ENCODE measurements at regions of chr19 and their contacts with region 1.

Region 1: DNA sequence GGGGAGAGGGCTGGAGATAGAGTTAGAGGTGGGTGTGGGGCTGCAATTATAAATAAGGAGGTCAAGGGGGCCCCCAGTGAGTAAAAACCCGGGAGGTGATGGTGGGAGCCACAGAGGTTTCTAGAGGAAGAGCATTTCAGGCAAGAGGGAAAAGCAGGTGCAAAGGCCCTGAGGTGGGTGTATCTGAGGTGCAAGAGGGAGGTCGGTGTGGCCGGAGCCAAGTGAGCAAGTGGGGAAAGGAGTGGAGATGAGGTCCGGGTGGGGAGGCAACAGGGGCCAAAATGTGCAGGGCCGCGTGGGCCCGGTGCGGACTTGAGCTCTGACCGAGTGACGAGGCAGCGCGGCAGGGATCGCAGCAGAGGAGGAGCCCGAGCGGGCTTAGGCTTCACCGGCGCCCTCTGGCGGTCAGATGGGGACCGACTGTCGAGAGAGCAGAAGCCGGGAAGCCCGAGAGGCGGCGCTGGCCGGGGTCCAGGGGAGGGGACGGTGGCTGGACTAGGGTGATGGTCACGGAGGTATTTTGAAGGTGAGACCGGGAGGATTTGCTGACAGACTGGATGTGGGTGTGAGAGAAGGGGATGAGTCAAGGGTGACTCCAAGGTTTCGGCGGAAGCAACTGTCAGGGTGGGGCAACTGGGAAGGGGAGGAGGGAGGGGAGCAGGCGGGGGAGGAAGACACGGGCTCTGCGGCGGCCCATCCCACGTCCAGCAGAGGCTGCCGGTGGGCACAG is 17.7 kb upstream of the SPACA4 start:
- DNase-seq: peak; percentile 47
- ATAC-seq: peak; percentile 93
- H3K4me3 ChIP-seq: peak overlapping the region; percentile 39 to 60
- H3K27ac ChIP-seq: no peak overlapping the region
- H3K4me1 ChIP-seq: 0 out of 2 replicates have a peak, but pooled peaks cover 4% of the 10 kb centered on the region
- H3K27me3 ChIP-seq: no peaks in the 10 kb centered on the region
- CTCF ChIP-seq: peak; percentile 94

Region 2: DNA sequence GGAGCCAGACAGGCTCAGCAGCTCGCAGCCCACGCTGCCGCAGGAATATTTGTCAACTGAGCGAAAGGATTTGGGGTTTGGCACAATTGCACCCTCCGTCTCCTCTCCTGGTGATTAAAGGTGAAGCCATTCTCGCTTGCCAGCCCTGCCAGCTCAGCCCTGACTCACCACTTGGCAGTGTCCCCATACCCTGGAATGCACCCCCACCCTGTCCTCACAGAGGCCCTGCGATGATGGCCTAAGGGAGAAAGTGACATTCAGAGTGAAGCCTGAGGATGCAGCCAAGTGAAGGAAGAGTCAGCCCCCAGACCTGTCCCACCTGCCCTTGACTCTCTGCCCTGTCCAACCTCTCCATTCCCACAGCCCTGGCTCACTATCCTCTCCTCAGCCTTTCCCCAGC is 100.8 kb before region 1 on chr19:
- CTCF ChIA-PET with region 1: interaction called, 11 read pairs
- POLR2A ChIA-PET with region 1: no interaction called
- in situ Hi-C with region 1: no loop called
- intact Hi-C with region 1: no loop called
- DNase-seq: peak; percentile 81
- ATAC-seq: peak; percentile 76
- H3K4me3 ChIP-seq: peak overlapping the region in 1 of 2 experiments; percentile 19; a peak in 1 of 4 replicates
- H3K27ac ChIP-seq: peak overlapping the region; percentile 82
- H3K4me1 ChIP-seq: peaks cover 28% of the 10 kb centered on the region
- H3K27me3 ChIP-seq: no peaks in the 10 kb centered on the region
- CTCF ChIP-seq: no peak

Region 3: DNA sequence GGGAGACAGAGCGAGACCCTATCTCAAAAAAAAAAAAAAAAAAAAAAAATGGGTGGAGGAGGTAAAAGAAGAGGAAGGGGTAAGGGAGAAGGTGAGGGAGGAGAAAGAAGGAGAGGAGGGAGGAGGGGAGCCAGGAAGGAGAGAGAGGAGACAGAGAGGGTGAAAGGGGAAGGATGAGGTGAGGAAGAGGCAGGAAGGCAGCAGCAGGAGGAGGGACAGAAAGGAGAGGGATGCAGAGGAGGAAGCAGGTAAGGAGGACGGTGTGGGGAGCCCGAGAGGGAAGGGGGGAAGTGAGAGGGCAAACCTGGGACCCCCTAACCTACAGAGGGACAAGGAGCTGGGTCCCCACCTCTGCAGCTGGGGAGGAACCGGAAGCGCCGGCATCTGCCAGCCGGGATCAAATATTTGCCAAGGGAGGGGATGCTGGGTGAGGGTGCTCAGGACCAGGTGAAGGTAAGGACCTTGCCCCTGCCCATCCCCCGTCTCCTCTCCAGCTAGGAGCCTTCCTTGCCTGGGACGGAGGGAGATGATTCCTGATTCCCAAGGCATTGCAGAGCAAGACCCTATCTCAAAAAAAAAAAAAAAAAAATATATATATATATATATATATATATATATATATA is 13.4 kb after region 1 on chr19:
- CTCF ChIA-PET with region 1: no interaction called
- POLR2A ChIA-PET with region 1: no interaction called
- in situ Hi-C with region 1: no loop called
- intact Hi-C with region 1: no loop called
- DNase-seq: no peak
- ATAC-seq: no peak
- H3K4me3 ChIP-seq: no peak overlapping the region
- H3K27ac ChIP-seq: no peak overlapping the region
- H3K4me1 ChIP-seq: no peaks in the 10 kb centered on the region
- H3K27me3 ChIP-seq: no peaks in the 10 kb centered on the region
- CTCF ChIP-seq: no peak

Region 4: DNA sequence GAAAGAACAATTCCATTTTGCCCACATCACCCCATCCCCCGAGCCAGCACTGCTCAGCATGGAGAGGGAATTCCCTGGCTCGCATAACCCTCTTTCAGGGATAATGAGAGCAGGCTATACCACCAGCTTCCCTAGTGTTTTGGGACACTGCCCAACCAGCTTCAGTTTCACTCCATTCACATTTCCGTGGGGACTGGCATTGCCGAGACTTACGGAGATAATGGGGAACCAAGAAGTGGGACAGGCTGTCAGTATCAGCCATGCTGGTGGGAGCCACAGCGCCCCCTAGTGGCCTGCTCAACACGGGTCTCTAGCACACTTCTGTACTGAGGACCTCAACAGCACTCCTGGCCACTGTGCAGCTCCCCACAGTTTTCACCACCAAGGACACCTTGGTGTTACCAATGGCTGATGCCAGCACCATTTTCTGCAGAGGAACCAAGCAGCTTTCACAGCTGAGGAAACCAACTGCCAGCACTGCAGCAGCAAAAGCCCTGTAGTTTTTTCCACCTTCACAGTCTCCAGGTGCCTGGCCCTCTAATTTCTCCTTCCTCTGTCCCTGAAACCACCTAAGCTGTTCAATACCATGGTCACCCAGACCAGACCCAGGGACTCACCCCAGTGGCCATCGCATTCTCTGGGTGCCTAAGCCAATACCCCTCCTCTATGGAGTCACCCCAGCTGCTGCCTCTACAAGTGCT is 712.5 kb after region 1 on chr19:
- CTCF ChIA-PET with region 1: no interaction called
- POLR2A ChIA-PET with region 1: no interaction called
- in situ Hi-C with region 1: no loop called
- intact Hi-C with region 1: no loop called
- DNase-seq: peak; percentile 38
- ATAC-seq: peak; percentile 96
- H3K4me3 ChIP-seq: no peak overlapping the region
- H3K27ac ChIP-seq: no peak overlapping the region
- H3K4me1 ChIP-seq: no peaks in the 10 kb centered on the region; the same call in 1 of the 2 replicates
- H3K27me3 ChIP-seq: no peaks in the 10 kb centered on the region
- CTCF ChIP-seq: peak; percentile 90

Region 5: GRCh38 chr19:49528211-49528771 is 939.5 kb after region 1 on chr19:
- CTCF ChIA-PET with region 1: no interaction called
- POLR2A ChIA-PET with region 1: no interaction called
- in situ Hi-C with region 1: no loop called
- intact Hi-C with region 1: no loop called
- DNase-seq: no peak
- ATAC-seq: no peak
- H3K4me3 ChIP-seq: peak overlapping the region; percentile 46 to 58
- H3K27ac ChIP-seq: no peak overlapping the region
- H3K4me1 ChIP-seq: no peaks in the 10 kb centered on the region
- H3K27me3 ChIP-seq: no peaks in the 10 kb centered on the region
- CTCF ChIP-seq: no peak